CD8-positive, alpha-beta memory T cell (primary cell): ENCODE measurements at regions of chr11 and their contacts with region 1.

Region 1: GRCh38 chr11:6251120-6251733 is 8.4 kb upstream of the CCKBR start:
- DNase-seq: peak in 4 of 5 donors; percentile 10 to 54 (median 31)
- H3K4me3 ChIP-seq: no peak overlapping the region
- H3K4me3 Mint-ChIP-seq: no peak overlapping the region
- H3K27ac ChIP-seq: no peak overlapping the region
- H3K27ac Mint-ChIP-seq: no peak overlapping the region
- H3K4me1 ChIP-seq: no peaks in the 10 kb centered on the region
- H3K4me1 Mint-ChIP-seq: no peaks in the 10 kb centered on the region
- H3K27me3 ChIP-seq: no peaks in the 10 kb centered on the region
- H3K27me3 Mint-ChIP-seq: peaks cover 4 to 7% of the 10 kb centered on the region in 2 donors

Region 2: DNA sequence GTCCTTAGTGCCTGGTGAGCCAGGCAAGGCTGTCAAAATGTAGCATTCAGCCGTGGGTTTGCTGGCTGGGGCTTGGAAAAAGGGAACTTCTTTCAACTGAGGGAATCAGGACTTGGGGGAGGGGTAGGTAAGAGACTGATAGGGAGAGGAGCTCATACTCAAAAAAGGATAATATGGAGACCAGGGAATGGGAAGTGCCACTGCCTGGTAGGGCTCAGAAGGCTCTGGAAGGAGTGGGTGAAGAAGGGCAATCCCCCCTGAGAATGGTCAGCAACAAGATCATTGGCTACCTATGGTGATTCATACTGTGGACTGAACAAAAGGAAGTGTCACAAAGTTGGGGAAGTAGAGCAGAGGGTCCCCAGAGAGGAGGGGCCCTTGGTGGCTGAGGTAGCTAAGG is 10.4 kb before region 1 on chr11:
- CTCF ChIA-PET with region 1: interaction called, 10 read pairs
- POLR2A ChIA-PET with region 1: no interaction called
- DNase-seq: no peak
- H3K4me3 ChIP-seq: no peak overlapping the region
- H3K4me3 Mint-ChIP-seq: no peak overlapping the region
- H3K27ac ChIP-seq: no peak overlapping the region
- H3K27ac Mint-ChIP-seq: no peak overlapping the region
- H3K4me1 ChIP-seq: no peaks in the 10 kb centered on the region
- H3K4me1 Mint-ChIP-seq: no peaks in the 10 kb centered on the region
- H3K27me3 ChIP-seq: peaks cover 4% of the 10 kb centered on the region
- H3K27me3 Mint-ChIP-seq: peaks cover 22 to 29% of the 10 kb centered on the region in 2 donors

Region 3: GRCh38 chr11:6353367-6353987 is 102.2 kb after region 1 on chr11:
- CTCF ChIA-PET with region 1: interaction called, 24 read pairs
- POLR2A ChIA-PET with region 1: no interaction called
- DNase-seq: peak; percentile 23 to 65 (median 35)
- H3K4me3 ChIP-seq: no peak overlapping the region
- H3K4me3 Mint-ChIP-seq: peak overlapping the region in 1 of 7 donors; percentile 28
- H3K27ac ChIP-seq: no peak overlapping the region
- H3K27ac Mint-ChIP-seq: no peak overlapping the region
- H3K4me1 ChIP-seq: no peaks in the 10 kb centered on the region
- H3K4me1 Mint-ChIP-seq: peaks cover 0 to 3% (median 0%) of the 10 kb centered on the region in 3 donors
- H3K27me3 ChIP-seq: no peaks in the 10 kb centered on the region
- H3K27me3 Mint-ChIP-seq: peaks cover 0 to 3% of the 10 kb centered on the region in 2 donors